K562 (cell line): ENCODE measurements at regions of chr16 and their contacts with region 1.

Region 1: GRCh38 chr16:11255737-11256660 is at the start of gene SOCS1:
- DNase-seq: peak; percentile 91 to 94 (median 94)
- ATAC-seq: peak; percentile 80
- H3K4me3 ChIP-seq: peak within 1 kb of the TSS; percentile 82
- H3K27ac ChIP-seq: peak within 1 kb of the TSS; percentile 86
- H3K4me1 ChIP-seq: peaks cover 40 to 47% of the 10 kb centered on the region in 2 experiments; a peak in 4 of 5 replicates
- H3K27me3 ChIP-seq: 0 out of 5 replicates have a peak, but pooled peaks cover 0 to 8% of the 10 kb centered on the region in 2 experiments
- CTCF ChIP-seq: peak; percentile 73 to 87 (median 84)
- EP300 ChIP-seq: no peak
- POLR2A ChIP-seq: peak; percentile 73
- RAD21 ChIP-seq: peak; percentile 91 to 94
- polyA plus RNA-seq, gene SOCS1: 0.04 to 0.10 TPM

Region 2: DNA sequence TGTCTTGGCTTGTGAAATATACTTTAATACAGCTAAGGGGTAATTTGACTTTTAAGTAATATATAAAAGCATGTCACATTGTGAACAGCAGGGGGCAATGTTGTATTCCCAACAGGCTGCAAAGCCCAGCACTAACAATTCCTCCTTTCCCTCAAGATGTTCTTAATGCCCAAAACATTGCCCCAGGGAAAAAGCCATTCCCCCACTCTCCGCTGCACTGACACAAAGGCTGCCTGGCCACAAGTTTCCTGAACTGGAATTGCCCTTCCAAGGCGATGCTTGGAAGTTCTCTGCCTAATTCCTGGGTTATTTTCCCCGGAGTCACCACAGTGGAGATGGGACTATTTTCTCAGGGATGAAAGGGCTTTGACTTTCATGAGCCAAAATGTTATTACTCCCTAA is 284.4 kb before region 1 on chr16:
- CTCF ChIA-PET with region 1: interaction called, 58 read pairs
- POLR2A ChIA-PET with region 1: interaction called, 23 read pairs
- in situ Hi-C with region 1: no loop called
- intact Hi-C with region 1: loop called (anchors 1 kb)
- DNase-seq: peak; percentile 35 to 83 (median 50)
- ATAC-seq: peak; percentile 68
- H3K4me3 ChIP-seq: no peak overlapping the region
- H3K27ac ChIP-seq: peak overlapping the region; percentile 63; the same call in 1 of the 3 replicates
- H3K4me1 ChIP-seq: peaks cover 19 to 22% of the 10 kb centered on the region in 2 experiments
- H3K27me3 ChIP-seq: no peaks in the 10 kb centered on the region
- CTCF ChIP-seq: peak; percentile 68 to 92 (median 69)
- EP300 ChIP-seq: no peak; the same call in 1 of the 2 replicates
- POLR2A ChIP-seq: no peak
- RAD21 ChIP-seq: peak; percentile 92 to 96

Region 3: DNA sequence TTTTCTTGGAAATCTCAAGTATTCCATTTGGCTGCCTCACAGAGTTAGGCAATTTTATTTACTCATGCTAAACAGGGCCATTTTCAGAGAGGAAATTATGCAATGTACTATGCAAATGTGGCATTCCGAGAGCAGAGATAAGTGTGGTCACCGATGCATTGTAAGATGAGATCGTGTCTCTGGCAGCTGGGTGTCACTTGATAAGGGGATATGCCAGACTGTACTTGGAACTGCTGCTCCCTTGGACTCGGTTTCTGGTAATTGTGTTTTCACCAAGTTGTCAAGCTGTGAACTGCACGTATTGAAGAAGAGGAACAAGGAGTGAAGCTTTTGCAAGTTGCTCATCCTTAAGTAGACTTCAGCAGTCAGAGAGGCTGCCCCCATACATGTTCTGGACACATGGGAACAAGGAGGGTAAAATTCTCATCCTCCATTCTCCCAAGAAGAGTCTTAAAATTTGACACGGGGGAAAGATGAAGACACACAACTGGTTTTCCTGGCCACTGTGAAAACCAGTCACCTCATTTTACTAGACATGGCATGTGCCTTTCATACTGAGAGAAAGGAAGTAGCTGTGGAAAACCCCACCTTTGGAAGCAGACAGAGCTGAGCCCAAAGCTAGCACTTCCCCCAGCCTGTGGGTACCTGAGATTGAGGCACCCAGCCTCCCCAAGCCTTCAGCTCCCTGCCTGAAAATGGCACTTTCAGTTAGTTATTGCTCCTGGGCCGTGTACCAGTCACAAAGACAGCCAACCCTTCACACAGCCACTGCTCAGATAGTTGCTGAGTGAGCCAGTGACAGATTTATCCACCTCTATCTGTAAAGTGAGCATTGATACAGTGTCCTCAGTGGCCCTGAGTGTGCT is 150.7 kb before region 1 on chr16:
- CTCF ChIA-PET with region 1: interaction called, 9 read pairs
- POLR2A ChIA-PET with region 1: interaction called, 36 read pairs
- in situ Hi-C with region 1: no loop called
- intact Hi-C with region 1: loop called (anchors 2 kb)
- DNase-seq: peak; percentile 80 to 94 (median 85)
- ATAC-seq: peak; percentile 72
- H3K4me3 ChIP-seq: no peak overlapping the region
- H3K27ac ChIP-seq: peak overlapping the region; percentile 54
- H3K4me1 ChIP-seq: peaks cover 47 to 56% of the 10 kb centered on the region in 2 experiments
- H3K27me3 ChIP-seq: no peaks in the 10 kb centered on the region
- CTCF ChIP-seq: no peak
- EP300 ChIP-seq: peak; percentile 99
- POLR2A ChIP-seq: no peak
- RAD21 ChIP-seq: peak; percentile 31 to 45

Region 4: DNA sequence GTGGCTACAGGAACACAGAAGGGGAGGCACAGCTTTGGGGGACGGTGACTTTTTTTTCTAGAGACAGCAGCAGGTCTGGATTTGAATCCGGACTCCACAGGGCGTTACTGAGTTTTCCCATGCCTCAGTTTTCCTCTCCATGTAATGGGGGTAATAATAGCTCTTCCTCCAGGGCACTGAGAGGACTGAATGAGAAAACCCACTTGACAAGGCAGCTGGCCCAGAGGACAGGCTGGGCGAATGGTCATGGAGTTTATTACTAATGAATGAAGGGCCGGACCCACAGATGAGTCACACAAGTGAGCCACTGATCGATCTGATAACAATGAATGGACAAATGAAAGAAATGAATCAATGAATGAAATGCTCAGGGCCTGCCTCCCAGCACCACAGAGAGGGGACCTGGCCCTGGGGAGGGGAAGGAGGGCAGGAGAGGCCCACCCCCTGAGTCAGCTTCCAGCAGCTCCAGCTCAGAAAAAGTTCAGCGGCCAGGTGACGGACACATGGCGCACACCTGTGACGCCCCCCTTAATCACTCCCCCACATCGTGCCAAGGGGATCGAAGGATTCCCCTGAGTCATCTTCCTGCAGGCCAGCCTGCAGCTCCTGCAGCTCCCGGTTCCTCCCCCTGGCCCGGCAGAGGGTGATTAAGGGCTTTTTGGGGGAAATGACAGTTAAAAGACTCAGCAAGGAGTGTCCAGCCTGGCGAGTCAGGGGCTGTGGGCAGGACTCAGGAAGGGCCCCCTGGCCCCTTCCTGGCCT is 54.3 kb before region 1 on chr16:
- CTCF ChIA-PET with region 1: no interaction called
- POLR2A ChIA-PET with region 1: interaction called, 11 read pairs
- in situ Hi-C with region 1: no loop called
- intact Hi-C with region 1: loop called (anchors 10 kb)
- DNase-seq: peak; percentile 80 to 90 (median 84)
- ATAC-seq: peak; percentile 84
- H3K4me3 ChIP-seq: no peak overlapping the region
- H3K27ac ChIP-seq: peak overlapping the region; percentile 76
- H3K4me1 ChIP-seq: peaks cover 39 to 63% of the 10 kb centered on the region in 2 experiments
- H3K27me3 ChIP-seq: no peaks in the 10 kb centered on the region
- CTCF ChIP-seq: no peak
- EP300 ChIP-seq: peak; percentile 83
- POLR2A ChIP-seq: 0 out of 2 replicates have a peak, but pooled peaks have one; percentile 31
- RAD21 ChIP-seq: peak in 1 of 2 experiments; percentile 12; a peak in 1 of 4 replicates

Region 5: DNA sequence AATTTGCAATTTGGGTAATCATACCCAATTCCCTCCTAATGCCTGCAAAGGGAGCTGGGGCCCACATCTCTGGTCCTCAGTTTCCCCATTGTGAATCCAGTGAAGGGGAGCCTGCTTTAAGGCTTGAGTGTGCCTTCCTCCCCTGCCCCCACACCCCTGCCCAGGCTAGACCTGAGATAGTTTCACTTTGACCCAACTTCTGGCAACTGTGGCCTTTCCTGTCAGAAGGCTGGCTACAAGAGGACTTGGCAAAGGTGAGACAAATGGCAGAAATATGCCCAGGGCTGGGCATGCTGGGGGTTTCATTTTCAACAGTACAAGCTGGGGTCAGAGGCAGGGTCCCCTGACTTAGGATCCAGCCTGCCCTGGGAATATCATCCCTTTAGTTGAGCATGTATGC is 10.0 kb before region 1 on chr16:
- CTCF ChIA-PET with region 1: no interaction called
- POLR2A ChIA-PET with region 1: interaction called, 17 read pairs
- in situ Hi-C with region 1: no loop called
- intact Hi-C with region 1: no loop called
- DNase-seq: no peak
- ATAC-seq: no peak
- H3K4me3 ChIP-seq: no peak overlapping the region
- H3K27ac ChIP-seq: no peak overlapping the region
- H3K4me1 ChIP-seq: peaks cover 9 to 14% of the 10 kb centered on the region in 2 experiments; a peak in 4 of 5 replicates
- H3K27me3 ChIP-seq: no peaks in the 10 kb centered on the region
- CTCF ChIP-seq: no peak
- EP300 ChIP-seq: no peak
- POLR2A ChIP-seq: no peak
- RAD21 ChIP-seq: no peak

Region 6: DNA sequence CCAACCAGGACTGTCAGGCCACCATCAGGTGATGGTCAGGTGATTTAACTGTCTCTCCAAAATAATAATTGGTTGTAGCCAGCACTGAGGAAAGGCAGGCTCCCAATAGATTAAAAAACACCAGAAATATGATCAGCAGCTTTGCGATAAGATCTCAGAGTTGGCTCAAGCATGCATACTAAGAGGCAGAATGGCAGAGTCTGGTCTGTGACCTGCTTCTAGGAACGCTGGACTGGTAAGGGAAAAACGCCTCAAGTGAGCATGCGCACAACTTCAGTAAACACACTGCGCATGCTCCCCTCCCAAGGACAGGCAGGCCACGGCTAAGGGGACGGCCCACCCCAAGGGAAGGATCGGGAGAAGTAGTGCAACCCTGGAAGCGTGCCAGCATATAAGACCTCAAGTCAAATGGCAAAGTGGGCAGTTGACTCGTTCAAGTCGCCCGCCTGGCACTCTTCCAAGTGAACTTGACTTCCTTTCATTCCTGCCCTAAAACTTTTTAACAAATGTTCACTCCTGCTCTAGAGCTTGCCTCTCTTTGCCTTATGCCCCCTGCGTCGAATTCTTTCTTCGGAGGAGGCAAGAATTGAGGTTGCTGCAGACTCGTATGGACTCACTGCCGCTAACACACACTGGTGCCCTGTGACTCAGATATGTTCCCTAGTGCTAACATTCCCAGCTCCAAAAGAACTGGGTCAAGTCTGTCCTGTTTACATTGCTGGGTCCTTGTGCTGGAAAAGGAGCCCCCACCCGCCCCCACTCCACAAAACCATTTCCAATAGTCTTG is 47.5 kb after region 1 on chr16:
- CTCF ChIA-PET with region 1: no interaction called
- POLR2A ChIA-PET with region 1: no interaction called
- in situ Hi-C with region 1: no loop called
- intact Hi-C with region 1: no loop called
- DNase-seq: peak in 2 of 4 experiments; percentile 23
- ATAC-seq: no peak; the same call in 2 of the 3 replicates
- H3K4me3 ChIP-seq: no peak overlapping the region
- H3K27ac ChIP-seq: no peak overlapping the region
- H3K4me1 ChIP-seq: peaks cover 0 to 9% of the 10 kb centered on the region in 2 experiments; a peak in 2 of 5 replicates
- H3K27me3 ChIP-seq: peaks cover 0 to 6% of the 10 kb centered on the region in 2 experiments; a peak in 2 of 5 replicates
- CTCF ChIP-seq: no peak
- EP300 ChIP-seq: no peak
- POLR2A ChIP-seq: no peak
- RAD21 ChIP-seq: no peak